A673 (cell line): ENCODE measurements at regions of chr19 and their contacts with region 1.

Region 1: GRCh38 chr19:8324186-8325050 is 3.1 kb downstream of the RPS28 start:
- DNase-seq: no peak
- H3K4me3 ChIP-seq: no peak overlapping the region
- H3K27ac ChIP-seq: no peak overlapping the region
- H3K4me1 ChIP-seq: peaks cover 21% of the 10 kb centered on the region
- H3K27me3 ChIP-seq: no peaks in the 10 kb centered on the region
- CTCF ChIP-seq: no peak

Region 2: DNA sequence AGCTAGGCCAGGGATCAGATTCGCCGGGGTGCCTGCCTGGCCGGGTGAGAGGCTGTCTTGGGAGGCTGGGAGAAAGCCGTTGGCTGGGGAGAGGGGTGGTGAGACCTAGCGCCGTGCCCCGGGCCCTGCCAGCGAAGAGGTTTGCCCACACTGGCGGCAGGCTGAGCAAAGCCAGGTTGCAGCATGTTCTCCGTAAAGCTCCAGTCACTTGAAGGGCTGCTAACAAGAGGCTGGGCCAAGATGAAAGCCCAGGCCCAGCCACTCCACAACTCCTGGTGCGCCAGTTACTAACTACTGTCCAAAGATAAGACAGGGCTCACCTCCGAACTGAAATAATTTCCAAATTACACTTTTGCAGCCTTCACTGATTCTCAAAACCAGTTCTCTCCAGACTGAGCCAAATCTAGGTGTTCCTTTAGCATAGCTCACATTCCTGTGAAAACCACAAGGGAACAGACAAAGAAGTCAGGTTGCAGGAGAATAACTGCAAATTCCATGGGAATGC is 335.3 kb before region 1 on chr19:
- CTCF ChIA-PET with region 1: no interaction called
- POLR2A ChIA-PET with region 1: no interaction called
- intact Hi-C with region 1: no loop called
- DNase-seq: no peak
- H3K4me3 ChIP-seq: no peak overlapping the region
- H3K27ac ChIP-seq: no peak overlapping the region
- H3K4me1 ChIP-seq: no peaks in the 10 kb centered on the region
- H3K27me3 ChIP-seq: no peaks in the 10 kb centered on the region
- CTCF ChIP-seq: no peak

Region 3: GRCh38 chr19:8238251-8238650 is 86.2 kb before region 1 on chr19:
- CTCF ChIA-PET with region 1: no interaction called
- POLR2A ChIA-PET with region 1: no interaction called
- intact Hi-C with region 1: no loop called
- DNase-seq: no peak
- H3K4me3 ChIP-seq: no peak overlapping the region
- H3K27ac ChIP-seq: no peak overlapping the region
- H3K4me1 ChIP-seq: peaks cover 11% of the 10 kb centered on the region
- H3K27me3 ChIP-seq: no peaks in the 10 kb centered on the region
- CTCF ChIP-seq: no peak

Region 4: DNA sequence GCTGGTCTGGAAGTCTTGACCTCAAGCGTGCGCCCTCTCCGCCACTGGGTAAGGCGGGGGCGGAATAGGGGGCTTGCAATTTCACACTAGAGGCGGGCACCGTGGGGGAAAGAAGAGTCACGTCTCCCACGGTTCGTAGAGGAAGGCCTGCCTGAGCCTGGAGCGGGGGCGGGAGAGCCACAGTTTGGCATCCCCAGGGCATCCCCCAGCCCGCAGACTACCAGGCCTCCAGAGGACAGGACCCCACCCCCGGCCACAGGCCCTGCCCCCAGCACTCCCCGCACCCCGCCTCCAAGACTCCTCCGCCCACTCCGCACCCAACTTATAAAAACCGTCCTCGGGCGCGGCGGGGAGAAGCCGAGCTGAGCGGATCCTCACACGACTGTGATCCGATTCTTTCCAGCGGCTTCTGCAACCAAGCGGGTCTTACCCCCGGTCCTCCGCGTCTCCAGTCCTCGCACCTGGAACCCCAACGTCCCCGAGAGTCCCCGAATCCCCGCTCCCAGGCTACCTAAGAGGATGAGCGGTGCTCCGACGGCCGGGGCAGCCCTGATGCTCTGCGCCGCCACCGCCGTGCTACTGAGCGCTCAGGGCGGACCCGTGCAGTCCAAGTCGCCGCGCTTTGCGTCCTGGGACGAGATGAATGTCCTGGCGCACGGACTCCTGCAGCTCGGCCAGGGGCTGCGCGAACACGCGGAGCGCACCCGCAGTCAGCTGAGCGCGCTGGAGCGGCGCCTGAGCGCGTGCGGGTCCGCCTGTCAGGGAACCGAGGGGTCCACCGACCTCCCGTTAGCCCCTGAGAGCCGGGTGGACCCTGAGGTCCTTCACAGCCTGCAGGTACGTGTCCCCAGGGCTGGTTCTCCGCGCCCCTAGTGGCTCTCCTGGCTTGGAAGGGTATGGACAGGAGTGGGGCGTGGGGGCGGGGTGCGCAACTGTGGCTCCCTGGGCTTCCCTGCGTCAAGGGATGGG is 39.7 kb after region 1 on chr19 and contains the start of gene ANGPTL4:
- CTCF ChIA-PET with region 1: interaction called, 11 read pairs
- POLR2A ChIA-PET with region 1: no interaction called
- intact Hi-C with region 1: no loop called
- DNase-seq: peak; percentile 83
- H3K4me3 ChIP-seq: peak within 1 kb of the TSS; percentile 50
- H3K27ac ChIP-seq: peak within 1 kb of the TSS; percentile 38
- H3K4me1 ChIP-seq: peaks cover 36% of the 10 kb centered on the region
- H3K27me3 ChIP-seq: peaks cover 6% of the 10 kb centered on the region
- CTCF ChIP-seq: no peak
- total RNA-seq, gene ANGPTL4: 1.1 and 1.7 TPM in 2 replicates

Region 5: DNA sequence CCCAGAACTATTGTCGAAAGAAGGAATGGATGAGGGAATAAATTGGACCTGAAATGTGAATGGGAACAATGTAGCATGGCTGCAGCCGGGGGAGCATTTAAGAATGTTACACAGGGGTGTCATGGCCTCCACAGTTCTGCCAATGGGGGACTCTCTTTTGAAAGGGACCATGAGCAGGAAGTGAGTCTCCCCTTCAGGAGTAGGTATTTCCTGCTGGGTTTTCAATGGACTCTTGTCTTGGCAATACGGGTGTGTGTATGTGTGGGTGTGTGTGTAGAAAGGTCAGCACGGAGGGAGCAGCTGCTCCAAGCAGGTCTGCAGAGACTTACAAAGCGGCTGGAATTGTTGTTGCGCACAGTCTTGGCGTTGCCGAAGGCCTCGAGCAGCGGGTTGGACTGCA is 228.4 kb after region 1 on chr19:
- CTCF ChIA-PET with region 1: no interaction called
- POLR2A ChIA-PET with region 1: no interaction called
- intact Hi-C with region 1: no loop called
- DNase-seq: peak; percentile 80
- H3K4me3 ChIP-seq: no peak overlapping the region
- H3K27ac ChIP-seq: no peak overlapping the region
- H3K4me1 ChIP-seq: no peaks in the 10 kb centered on the region
- H3K27me3 ChIP-seq: no peaks in the 10 kb centered on the region
- CTCF ChIP-seq: no peak